Activated CD4-positive, alpha-beta T cell treated with anti-CD3 and anti-CD28 coated beads, Interleukin-2, amount 10 ng/mL, durations not matched to agents 24 days and 14 days (primary cell): ENCODE measurements at regions of chr1 and their contacts with region 1.

Region 1: GRCh38 chr1:70509996-70510876 is 99.2 kb downstream of the CTH start:
- DNase-seq: no peak
- H3K4me3 Mint-ChIP-seq: no peak overlapping the region
- H3K27ac Mint-ChIP-seq: no peak overlapping the region
- H3K4me1 Mint-ChIP-seq: no peaks in the 10 kb centered on the region
- H3K27me3 Mint-ChIP-seq: peaks cover 11% of the 10 kb centered on the region

Region 2: DNA sequence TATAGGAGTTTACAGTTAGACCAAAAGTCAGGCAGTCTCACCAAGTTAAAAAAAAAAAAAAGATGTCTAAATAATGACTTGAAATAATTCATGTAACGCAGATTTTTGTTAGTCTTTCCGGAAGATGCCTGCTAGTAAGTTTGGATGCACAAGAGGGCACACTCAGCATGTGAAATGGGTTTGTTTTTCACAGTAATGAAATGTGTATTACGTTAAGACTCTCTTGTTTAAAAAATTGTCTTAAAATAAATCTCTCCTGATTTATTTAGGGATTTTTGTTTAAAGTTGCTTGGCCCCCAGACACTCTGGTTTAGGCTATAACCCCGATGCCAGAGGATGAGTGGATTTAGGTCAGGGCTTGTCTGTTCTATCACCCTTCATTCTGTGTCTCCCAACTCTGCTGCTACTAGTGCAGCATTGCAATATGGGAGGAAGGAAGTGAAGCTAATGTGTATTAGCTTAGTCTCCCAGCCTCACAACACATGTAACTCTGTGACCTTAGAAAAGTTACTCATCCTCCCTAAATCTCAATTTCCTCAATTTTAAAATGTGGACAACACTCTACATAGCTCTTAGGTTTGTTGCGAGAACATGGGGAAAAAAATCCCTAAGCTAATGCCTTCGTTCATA is 73.5 kb before region 1 on chr1:
- intact Hi-C with region 1: loop called (anchors 5 kb)
- DNase-seq: no peak
- H3K4me3 Mint-ChIP-seq: no peak overlapping the region
- H3K27ac Mint-ChIP-seq: no peak overlapping the region
- H3K4me1 Mint-ChIP-seq: peaks cover 12% of the 10 kb centered on the region
- H3K27me3 Mint-ChIP-seq: no peaks in the 10 kb centered on the region